Activated naive CD8-positive, alpha-beta T cell treated with anti-CD3 and anti-CD28 coated beads, Interleukin-2, amount 10 ng/mL, durations not matched to agents 7 days and 5 days (primary cell): ENCODE measurements at regions of chr6 and their contacts with region 1.

Region 1: GRCh38 chr6:7389451-7390225 is at the starts of genes CAGE1 and RIOK1:
- DNase-seq: peak; percentile 96
- ATAC-seq: peak; percentile 97
- H3K4me3 Mint-ChIP-seq: peak within 1 kb of the TSS; percentile 88
- H3K27ac Mint-ChIP-seq: peak within 1 kb of the TSS; percentile 98
- H3K4me1 Mint-ChIP-seq: peaks cover 31% of the 10 kb centered on the region
- H3K27me3 Mint-ChIP-seq: no peaks in the 10 kb centered on the region
- total RNA-seq, gene CAGE1: 0.17 to 0.20 TPM
- total RNA-seq, gene RIOK1: 29.6 to 31.1 TPM

Region 2: GRCh38 chr6:7312616-7313504 is 76.8 kb before region 1 on chr6 and contains the start of gene SSR1:
- POLR2A ChIA-PET with region 1: interaction called, 19 read pairs
- DNase-seq: peak; percentile 94
- ATAC-seq: peak; percentile 97
- H3K4me3 Mint-ChIP-seq: peak within 1 kb of the TSS; percentile 92
- H3K27ac Mint-ChIP-seq: peak within 1 kb of the TSS; percentile 89
- H3K4me1 Mint-ChIP-seq: peaks cover 25% of the 10 kb centered on the region
- H3K27me3 Mint-ChIP-seq: no peaks in the 10 kb centered on the region
- total RNA-seq, gene SSR1: 112 to 123 TPM